Calu3 (cell line): ENCODE measurements at regions of chr15 and their contacts with region 1.

Region 1: GRCh38 chr15:63381301-63382204 is at the start of gene CA12:
- DNase-seq: peak; percentile 56
- H3K4me3 Mint-ChIP-seq: peak within 1 kb of the TSS; percentile 83
- H3K27ac Mint-ChIP-seq: peak within 1 kb of the TSS; percentile 29
- H3K4me1 Mint-ChIP-seq: peaks cover 58% of the 10 kb centered on the region
- H3K27me3 Mint-ChIP-seq: no peaks in the 10 kb centered on the region
- CTCF ChIP-seq: no peak
- total RNA-seq, gene CA12: 21.5 and 26.0 TPM in 2 replicates

Region 2: GRCh38 chr15:63288778-63289378 is 92.7 kb before region 1 on chr15:
- CTCF ChIA-PET with region 1: no interaction called
- intact Hi-C with region 1: no loop called
- DNase-seq: peak; percentile 30
- H3K4me3 Mint-ChIP-seq: no peak overlapping the region
- H3K27ac Mint-ChIP-seq: no peak overlapping the region
- H3K4me1 Mint-ChIP-seq: peaks cover 9% of the 10 kb centered on the region
- H3K27me3 Mint-ChIP-seq: no peaks in the 10 kb centered on the region
- CTCF ChIP-seq: peak; percentile 55

Region 3: DNA sequence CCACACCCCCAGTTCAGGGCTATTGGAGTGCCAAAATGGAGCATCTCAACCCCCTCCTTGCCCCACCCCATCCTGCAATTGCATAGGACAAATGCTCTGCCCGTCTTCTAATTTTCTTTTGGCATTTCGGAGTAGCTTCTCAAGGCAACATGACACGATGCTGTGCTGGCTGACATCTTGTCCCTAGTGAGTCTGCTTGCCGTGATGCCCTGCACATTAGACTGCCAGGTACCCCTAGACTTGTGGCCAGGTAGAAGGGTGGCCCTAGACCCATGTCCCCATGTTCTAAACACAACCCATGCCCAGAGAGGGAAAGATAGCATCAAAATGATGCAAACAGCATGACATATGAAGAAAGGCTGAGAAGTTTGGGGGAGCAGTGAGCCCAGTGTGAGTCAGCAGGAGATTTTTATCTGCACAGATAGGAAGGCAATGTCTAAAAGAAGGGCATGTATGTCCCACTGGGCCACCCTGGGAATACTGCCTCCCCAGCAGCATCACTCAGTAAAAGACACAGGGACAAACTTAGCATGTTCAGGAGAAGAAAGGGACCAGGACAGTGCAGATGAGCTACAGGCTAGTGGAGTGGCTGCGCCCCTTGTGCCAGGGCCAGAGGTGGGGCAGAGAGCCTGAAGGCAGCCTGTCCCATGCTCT is 36.7 kb before region 1 on chr15:
- CTCF ChIA-PET with region 1: no interaction called
- intact Hi-C with region 1: loop called (anchors 5 kb)
- DNase-seq: no peak
- H3K4me3 Mint-ChIP-seq: no peak overlapping the region
- H3K27ac Mint-ChIP-seq: no peak overlapping the region
- H3K4me1 Mint-ChIP-seq: peaks cover 50% of the 10 kb centered on the region
- H3K27me3 Mint-ChIP-seq: no peaks in the 10 kb centered on the region
- CTCF ChIP-seq: no peak